RWPE1 (cell line): ENCODE measurements at regions of chr12 and their contacts with region 1.

Region 1: GRCh38 chr12:3299929-3300832 is 190.8 kb upstream of the PRMT8 start:
- DNase-seq: peak; percentile 88
- H3K27ac ChIP-seq: peak overlapping the region; percentile 90
- CTCF ChIP-seq: peak; percentile 63

Region 2: DNA sequence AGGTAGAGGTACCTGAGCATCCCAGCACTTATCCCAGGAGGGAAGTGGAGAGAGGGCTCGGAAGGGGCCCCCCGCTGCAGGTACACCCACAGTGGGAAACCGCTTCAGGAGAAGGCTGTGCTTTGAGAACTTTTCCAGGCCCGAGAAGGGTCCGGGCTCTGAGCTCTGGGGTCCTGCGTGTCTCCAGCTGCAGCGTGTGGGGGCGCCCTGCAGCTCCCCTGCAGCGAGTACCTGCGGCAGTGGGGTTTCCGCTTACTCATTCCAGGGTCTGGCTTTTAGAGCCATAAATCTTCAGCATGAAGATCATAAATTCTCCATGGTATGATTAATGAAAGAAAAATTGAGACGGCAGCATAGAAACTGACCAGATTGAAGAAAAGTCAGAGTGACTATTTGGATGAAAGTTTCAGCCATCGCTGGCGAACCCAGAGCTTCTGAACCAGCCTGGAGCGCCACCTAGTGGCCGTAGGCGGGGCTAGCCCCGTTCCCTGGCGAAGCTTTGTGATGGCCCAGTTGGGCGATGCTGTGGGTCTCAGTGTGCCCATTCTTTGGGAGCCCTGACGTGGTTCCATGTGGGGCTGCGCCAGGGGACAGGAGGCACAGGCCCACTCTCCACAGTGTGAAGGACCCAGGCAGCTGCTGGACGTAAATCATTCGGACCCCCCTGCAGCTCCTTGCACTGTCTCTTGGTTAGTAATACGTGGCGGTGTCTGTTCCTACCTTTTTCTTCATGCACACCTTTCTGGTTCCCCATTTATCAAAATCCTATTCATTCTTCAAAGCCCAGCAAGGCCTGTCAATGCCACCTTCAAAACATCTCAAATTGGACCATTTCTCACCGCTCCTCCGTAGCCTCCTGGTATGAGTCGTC is 24.8 kb before region 1 on chr12:
- CTCF ChIA-PET with region 1: interaction called, 17 read pairs
- POLR2A ChIA-PET with region 1: no interaction called
- DNase-seq: peak; percentile 74
- H3K27ac ChIP-seq: no peak overlapping the region
- CTCF ChIP-seq: peak; percentile 80

Region 3: DNA sequence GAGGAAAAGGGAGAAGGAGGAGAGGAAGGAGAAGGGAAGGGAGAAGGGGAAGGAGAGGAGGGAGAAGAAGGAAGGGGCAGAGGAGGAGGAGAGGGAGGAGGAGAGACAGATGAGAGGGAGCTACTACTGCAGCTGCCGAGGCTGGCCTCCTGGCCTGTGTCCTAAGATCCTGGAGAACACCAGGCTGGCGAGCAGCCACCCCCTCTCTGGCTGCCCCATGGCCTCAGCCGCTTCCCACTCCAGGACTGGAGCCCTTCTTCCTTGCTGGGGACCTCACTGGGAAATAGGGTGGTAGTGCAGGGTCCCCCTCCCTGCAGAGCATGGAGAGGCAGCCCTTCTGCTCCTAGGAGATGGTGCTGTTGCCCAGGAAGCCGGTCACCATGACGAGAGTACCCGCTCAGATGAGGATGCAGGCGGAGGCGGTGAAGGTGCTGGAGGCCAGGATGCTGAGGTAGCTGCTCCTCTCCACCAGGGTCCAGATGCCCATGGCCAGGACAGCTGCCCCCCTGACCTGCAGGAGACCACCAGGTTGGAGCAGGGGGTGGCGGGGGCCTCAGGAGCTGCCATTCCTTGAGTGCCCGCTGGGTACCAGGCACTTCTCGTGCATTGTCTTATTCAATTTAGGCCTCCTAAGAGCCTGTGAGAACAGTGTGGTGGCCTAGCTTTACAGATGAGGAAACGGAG is 23.0 kb after region 1 on chr12:
- CTCF ChIA-PET with region 1: no interaction called
- POLR2A ChIA-PET with region 1: no interaction called
- DNase-seq: no peak
- H3K27ac ChIP-seq: no peak overlapping the region
- CTCF ChIP-seq: no peak

Region 4: GRCh38 chr12:3365463-3366411 is 65.6 kb after region 1 on chr12:
- CTCF ChIA-PET with region 1: interaction called, 10 read pairs
- POLR2A ChIA-PET with region 1: no interaction called
- DNase-seq: peak; percentile 64
- H3K27ac ChIP-seq: no peak overlapping the region
- CTCF ChIP-seq: no peak

Region 5: GRCh38 chr12:3523058-3523457 is 222.9 kb after region 1 on chr12:
- CTCF ChIA-PET with region 1: interaction called, 13 read pairs
- POLR2A ChIA-PET with region 1: no interaction called
- DNase-seq: peak; percentile 9
- H3K27ac ChIP-seq: no peak overlapping the region
- CTCF ChIP-seq: no peak; the same call in 1 of the 2 replicates

Region 6: GRCh38 chr12:3777206-3777809 is 477.1 kb after region 1 on chr12:
- CTCF ChIA-PET with region 1: interaction called, 14 read pairs
- POLR2A ChIA-PET with region 1: no interaction called
- DNase-seq: peak; percentile 42
- H3K27ac ChIP-seq: no peak overlapping the region
- CTCF ChIP-seq: peak; percentile 38